Mammary epithelial cell (primary cell): ENCODE measurements at regions of chr12 and their contacts with region 1.

Region 1: GRCh38 chr12:46268590-46269558 is at the start of gene SLC38A1:
- DNase-seq: peak; percentile 88
- H3K4me3 ChIP-seq: peak within 1 kb of the TSS; percentile 51 to 97 (median 95)
- H3K27ac ChIP-seq: peak within 1 kb of the TSS; percentile 96
- H3K4me1 ChIP-seq: peaks cover 31% of the 10 kb centered on the region
- H3K27me3 ChIP-seq: no peaks in the 10 kb centered on the region
- CTCF ChIP-seq: peak in 1 of 2 donors; percentile 17
- total RNA-seq, gene SLC38A1: 208 to 360 TPM

Region 2: GRCh38 chr12:46357438-46358324 is 88.8 kb after region 1 on chr12:
- CTCF ChIA-PET with region 1: no interaction called
- dilution Hi-C with region 1: no loop called
- in situ Hi-C with region 1: loop called in 1 of 2 experiments (anchors 10 kb)
- intact Hi-C with region 1: loop called (anchors 2 kb)
- DNase-seq: peak; percentile 87
- H3K4me3 ChIP-seq: no peak overlapping the region
- H3K27ac ChIP-seq: peak overlapping the region; percentile 13
- H3K4me1 ChIP-seq: peaks cover 28% of the 10 kb centered on the region
- H3K27me3 ChIP-seq: no peaks in the 10 kb centered on the region
- CTCF ChIP-seq: no peak

Region 3: DNA sequence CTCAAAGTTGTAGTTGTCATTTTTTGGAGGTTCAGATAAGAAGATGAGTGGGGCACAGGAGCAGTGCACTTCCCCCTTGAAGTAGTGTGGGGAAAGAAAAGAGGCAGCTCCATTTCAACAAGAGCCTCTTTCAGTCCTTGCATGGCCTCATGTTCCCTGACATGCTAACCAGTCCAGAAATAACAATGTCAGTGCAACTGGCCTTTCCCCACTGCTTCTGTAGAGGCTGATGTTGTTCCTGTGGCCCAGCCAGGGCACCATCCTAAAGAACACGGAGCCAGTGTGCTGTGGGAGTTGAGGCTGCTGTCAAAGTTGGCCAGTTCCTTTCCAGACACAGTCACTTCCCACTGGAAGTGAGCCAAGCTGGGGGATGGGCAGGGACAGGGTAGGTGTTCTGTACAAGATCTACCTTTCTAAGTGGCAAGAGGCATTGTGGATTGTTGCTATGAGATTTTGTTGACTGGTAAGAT is 181.4 kb after region 1 on chr12:
- CTCF ChIA-PET with region 1: no interaction called
- dilution Hi-C with region 1: no loop called
- in situ Hi-C with region 1: no loop called
- intact Hi-C with region 1: loop called (anchors 5 kb)
- DNase-seq: peak; percentile 32
- H3K4me3 ChIP-seq: no peak overlapping the region
- H3K27ac ChIP-seq: no peak overlapping the region
- H3K4me1 ChIP-seq: peaks cover 62% of the 10 kb centered on the region
- H3K27me3 ChIP-seq: no peaks in the 10 kb centered on the region
- CTCF ChIP-seq: no peak

Region 4: DNA sequence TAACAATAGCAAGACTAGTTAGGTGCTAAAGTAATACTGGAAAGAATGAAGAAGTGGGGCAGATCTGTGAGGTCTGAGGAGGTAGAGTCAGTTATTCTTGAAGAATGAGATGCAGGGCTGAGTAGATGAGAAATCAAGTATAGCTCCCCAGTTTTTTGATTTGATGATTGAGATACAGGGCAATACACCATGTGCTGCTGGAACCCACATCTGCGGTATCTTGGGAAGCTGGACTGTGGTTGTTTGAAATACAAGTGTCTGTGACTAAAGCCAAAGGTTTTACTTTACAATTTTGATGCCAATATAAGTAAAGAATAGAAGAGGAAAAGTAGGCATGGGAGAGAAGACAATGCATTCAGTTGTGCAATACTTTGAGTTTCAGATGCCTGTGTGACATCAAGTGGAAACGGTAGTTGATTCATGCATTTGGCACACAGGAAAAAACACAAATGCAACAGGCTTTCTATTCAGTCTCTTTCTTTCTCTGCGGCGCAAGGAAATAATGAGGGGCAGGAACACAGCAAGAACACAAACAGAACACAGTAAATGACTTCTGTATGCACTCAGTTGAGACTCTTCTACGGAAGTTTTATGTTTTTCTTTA is 293.9 kb after region 1 on chr12:
- CTCF ChIA-PET with region 1: no interaction called
- dilution Hi-C with region 1: no loop called
- in situ Hi-C with region 1: loop called in 1 of 2 experiments (anchors 25 kb)
- intact Hi-C with region 1: no loop called
- DNase-seq: peak; percentile 95
- H3K4me3 ChIP-seq: no peak overlapping the region
- H3K27ac ChIP-seq: peak overlapping the region; percentile 96
- H3K4me1 ChIP-seq: peaks cover 41% of the 10 kb centered on the region
- H3K27me3 ChIP-seq: no peaks in the 10 kb centered on the region
- CTCF ChIP-seq: no peak

Region 5: GRCh38 chr12:46983393-46984266 is 714.8 kb after region 1 on chr12:
- CTCF ChIA-PET with region 1: no interaction called
- dilution Hi-C with region 1: no loop called
- in situ Hi-C with region 1: no loop called
- intact Hi-C with region 1: loop called (anchors 5 kb)
- DNase-seq: peak; percentile 60
- H3K4me3 ChIP-seq: no peak overlapping the region
- H3K27ac ChIP-seq: no peak overlapping the region
- H3K4me1 ChIP-seq: peaks cover 20% of the 10 kb centered on the region
- H3K27me3 ChIP-seq: no peaks in the 10 kb centered on the region
- CTCF ChIP-seq: peak; percentile 85 to 93